Mammary epithelial cell (primary cell): ENCODE measurements at regions of chr14 and their contacts with region 1.

Region 1: GRCh38 chr14:41280745-41281144 is 325.9 kb upstream of the LRFN5 start:
- DNase-seq: peak; percentile 1
- H3K4me3 ChIP-seq: no peak overlapping the region
- H3K27ac ChIP-seq: no peak overlapping the region
- H3K4me1 ChIP-seq: no peaks in the 10 kb centered on the region
- H3K27me3 ChIP-seq: no peaks in the 10 kb centered on the region
- CTCF ChIP-seq: peak in 1 of 2 donors; percentile 11

Region 2: GRCh38 chr14:41429184-41429583 is 148.4 kb after region 1 on chr14:
- CTCF ChIA-PET with region 1: no interaction called
- dilution Hi-C with region 1: no loop called
- in situ Hi-C with region 1: no loop called
- intact Hi-C with region 1: no loop called
- DNase-seq: no peak
- H3K4me3 ChIP-seq: no peak overlapping the region
- H3K27ac ChIP-seq: no peak overlapping the region
- H3K4me1 ChIP-seq: no peaks in the 10 kb centered on the region
- H3K27me3 ChIP-seq: no peaks in the 10 kb centered on the region
- CTCF ChIP-seq: no peak

Region 3: GRCh38 chr14:41586237-41586636 is 305.5 kb after region 1 on chr14:
- CTCF ChIA-PET with region 1: no interaction called
- dilution Hi-C with region 1: no loop called
- in situ Hi-C with region 1: no loop called
- intact Hi-C with region 1: loop called (anchors 1 kb)
- DNase-seq: no peak
- H3K4me3 ChIP-seq: no peak overlapping the region
- H3K27ac ChIP-seq: no peak overlapping the region
- H3K4me1 ChIP-seq: no peaks in the 10 kb centered on the region
- H3K27me3 ChIP-seq: no peaks in the 10 kb centered on the region
- CTCF ChIP-seq: no peak

Region 4: DNA sequence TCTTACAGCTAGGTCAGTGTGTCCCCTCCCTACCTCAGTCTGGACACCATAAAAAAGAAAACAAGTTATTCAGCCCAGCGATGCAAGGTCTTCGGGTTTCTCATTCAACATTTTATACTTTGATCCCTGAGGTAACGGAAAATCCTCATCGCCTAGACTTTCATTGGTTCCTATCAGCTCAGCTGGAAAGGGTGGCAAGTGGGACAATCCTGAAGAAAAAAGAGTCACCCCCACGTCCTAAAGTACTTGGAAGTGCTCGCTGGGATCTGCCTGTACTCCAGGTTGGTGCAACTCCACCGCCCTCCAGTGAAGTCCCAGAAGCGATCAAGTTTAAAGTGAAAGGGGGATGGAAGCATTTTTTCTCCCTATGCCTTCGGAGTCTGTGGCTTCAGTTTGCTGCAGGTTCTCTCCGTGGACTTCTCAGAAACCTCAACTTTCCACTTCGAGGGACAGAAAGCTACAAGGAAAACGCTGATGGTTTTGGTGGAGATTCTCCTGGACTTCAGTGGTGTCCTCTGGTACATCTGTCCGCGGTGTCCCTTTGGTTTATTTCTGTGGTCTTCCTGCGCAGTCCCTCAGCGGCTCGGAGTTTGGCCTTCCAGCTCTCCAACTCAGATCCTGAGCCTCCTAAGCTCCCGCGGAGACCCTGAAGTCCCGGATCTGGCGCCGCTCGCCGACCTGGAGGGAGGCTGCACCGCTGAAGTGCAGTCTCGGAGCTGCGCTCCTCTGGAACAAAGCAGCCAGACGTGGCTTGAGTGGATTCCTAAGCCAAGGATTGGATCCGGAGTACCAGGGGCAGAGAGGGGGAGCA is 324.2 kb after region 1 on chr14:
- CTCF ChIA-PET with region 1: no interaction called
- dilution Hi-C with region 1: no loop called
- in situ Hi-C with region 1: no loop called
- intact Hi-C with region 1: loop called (anchors 5 kb)
- DNase-seq: no peak
- H3K4me3 ChIP-seq: no peak overlapping the region
- H3K27ac ChIP-seq: no peak overlapping the region
- H3K4me1 ChIP-seq: peaks cover 4% of the 10 kb centered on the region
- H3K27me3 ChIP-seq: peaks cover 42% of the 10 kb centered on the region
- CTCF ChIP-seq: no peak